Heart right ventricle (tissue), 16 donors: ENCODE measurements at regions of chr16 and their contacts with region 1.

Region 1: DNA sequence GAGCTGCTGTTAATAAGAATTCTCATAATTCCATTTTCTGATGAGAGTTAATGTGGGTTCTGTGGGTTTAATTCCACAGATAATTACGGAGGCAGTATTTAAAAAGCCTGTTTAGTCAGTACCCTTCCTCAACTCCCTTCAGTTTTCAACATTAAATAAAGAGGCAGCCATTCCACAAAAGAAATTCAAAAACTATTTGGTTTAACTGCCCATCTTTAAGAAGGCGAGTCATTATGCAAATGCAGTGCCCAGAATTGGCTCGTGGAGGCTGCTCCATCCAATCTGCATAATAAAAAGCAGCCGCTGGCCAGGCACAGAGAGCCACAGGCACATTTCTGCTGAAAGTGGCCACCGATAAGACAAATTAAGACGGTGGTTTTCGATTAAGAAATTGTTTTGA is 194.4 kb upstream of the TOX3 start:
- DNase-seq: no peak
- ATAC-seq: no peak
- H3K4me3 ChIP-seq: no peak overlapping the region
- H3K27ac ChIP-seq: no peak overlapping the region
- H3K4me1 ChIP-seq: no peaks in the 10 kb centered on the region
- H3K27me3 ChIP-seq: peaks cover 0 to 4% (median 0%) of the 10 kb centered on the region in 7 donors
- CTCF ChIP-seq: no peak

Region 2: DNA sequence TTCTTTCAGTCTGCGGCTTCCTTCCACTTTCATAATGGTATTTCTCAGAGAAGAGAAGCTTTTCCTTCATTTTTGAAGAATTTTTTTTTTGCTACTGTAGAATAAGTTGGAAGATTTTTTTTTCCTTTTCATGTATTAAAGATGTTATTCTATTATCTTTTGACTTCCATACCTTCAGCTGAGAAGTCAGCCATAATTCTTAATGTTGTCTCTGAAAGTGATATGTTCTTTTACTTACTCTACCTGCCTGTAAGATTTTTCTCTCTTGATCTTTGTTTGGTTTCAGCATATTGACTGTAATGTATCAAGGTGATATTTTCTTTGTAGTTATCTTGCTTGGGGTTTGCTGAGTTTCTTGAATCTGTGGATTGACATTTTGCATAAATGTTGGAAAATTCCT is 50.9 kb before region 1 on chr16:
- intact Hi-C with region 1: loop called in 1 of 10 experiments (anchors 10 kb)
- DNase-seq: no peak
- ATAC-seq: no peak
- H3K4me3 ChIP-seq: no peak overlapping the region
- H3K27ac ChIP-seq: no peak overlapping the region
- H3K4me1 ChIP-seq: no peaks in the 10 kb centered on the region
- H3K27me3 ChIP-seq: no peaks in the 10 kb centered on the region
- CTCF ChIP-seq: no peak

Region 3: DNA sequence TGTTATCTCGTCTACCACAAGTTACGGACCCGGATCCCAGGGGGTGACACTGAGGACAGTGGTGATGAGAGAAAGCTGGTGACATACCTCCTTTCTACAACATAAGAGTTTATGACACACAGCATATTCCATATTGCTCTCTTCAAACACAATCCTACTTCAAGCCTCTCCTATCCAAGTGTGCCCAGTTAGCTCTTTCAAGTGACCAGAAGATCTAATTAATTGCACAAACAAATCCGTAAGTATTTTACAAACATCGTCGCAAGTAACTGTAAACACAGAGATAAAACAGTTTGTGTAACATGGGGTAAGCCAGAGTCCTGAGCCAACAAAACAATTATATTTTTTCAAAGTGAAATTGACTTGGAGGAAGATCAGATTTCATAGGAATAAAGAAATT is 76.3 kb after region 1 on chr16:
- intact Hi-C with region 1: no loop called
- DNase-seq: no peak
- ATAC-seq: no peak
- H3K4me3 ChIP-seq: no peak overlapping the region
- H3K27ac ChIP-seq: no peak overlapping the region
- H3K4me1 ChIP-seq: peaks cover 0 to 4% (median 0%) of the 10 kb centered on the region in 9 donors
- H3K27me3 ChIP-seq: no peaks in the 10 kb centered on the region
- CTCF ChIP-seq: no peak